Activated naive CD4-positive, alpha-beta T cell treated with anti-CD3 and anti-CD28 coated beads for 36 hours (primary cell): ENCODE measurements at regions of chr5 and their contacts with region 1.

Region 1: GRCh38 chr5:37111426-37112382 is 137.5 kb downstream of the CPLANE1 start:
- DNase-seq: peak; percentile 25
- H3K4me3 Mint-ChIP-seq: peak overlapping the region; percentile 8
- H3K27ac Mint-ChIP-seq: peak overlapping the region; percentile 37
- H3K4me1 Mint-ChIP-seq: peaks cover 37% of the 10 kb centered on the region
- H3K27me3 Mint-ChIP-seq: peaks cover 13% of the 10 kb centered on the region

Region 2: GRCh38 chr5:36928947-36929346 is 182.8 kb before region 1 on chr5:
- CTCF ChIA-PET with region 1: no interaction called
- intact Hi-C with region 1: loop called (anchors 5 kb)
- DNase-seq: no peak
- H3K4me3 Mint-ChIP-seq: no peak overlapping the region
- H3K27ac Mint-ChIP-seq: no peak overlapping the region
- H3K4me1 Mint-ChIP-seq: peaks cover 55% of the 10 kb centered on the region
- H3K27me3 Mint-ChIP-seq: no peaks in the 10 kb centered on the region

Region 3: GRCh38 chr5:37248970-37249686 is 137.4 kb after region 1 on chr5 and contains the start of gene CPLANE1:
- CTCF ChIA-PET with region 1: no interaction called
- intact Hi-C with region 1: loop called (anchors 2 kb)
- DNase-seq: peak; percentile 60
- H3K4me3 Mint-ChIP-seq: peak within 1 kb of the TSS; percentile 82
- H3K27ac Mint-ChIP-seq: no peak within 1 kb of the TSS
- H3K4me1 Mint-ChIP-seq: peaks cover 20% of the 10 kb centered on the region
- H3K27me3 Mint-ChIP-seq: no peaks in the 10 kb centered on the region
- total RNA-seq, gene CPLANE1: 3.6 to 5.2 TPM

Region 4: GRCh38 chr5:37448941-37449340 is 337.2 kb after region 1 on chr5:
- CTCF ChIA-PET with region 1: no interaction called
- intact Hi-C with region 1: loop called (anchors 1 kb)
- DNase-seq: no peak
- H3K4me3 Mint-ChIP-seq: no peak overlapping the region
- H3K27ac Mint-ChIP-seq: no peak overlapping the region
- H3K4me1 Mint-ChIP-seq: peaks cover 5% of the 10 kb centered on the region
- H3K27me3 Mint-ChIP-seq: no peaks in the 10 kb centered on the region